HEK293 (cell line): ENCODE measurements at regions of chr22 and their contacts with region 1.

Region 1: GRCh38 chr22:35150183-35151107 is 84.5 kb downstream of the ISX start:
- H3K4me3 ChIP-seq: no peak overlapping the region
- H3K27ac ChIP-seq: no peak overlapping the region
- H3K4me1 ChIP-seq: no peaks in the 10 kb centered on the region
- CTCF ChIP-seq: peak; percentile 70

Region 2: GRCh38 chr22:35023692-35024363 is 126.6 kb before region 1 on chr22:
- CTCF ChIA-PET with region 1: interaction called, 10 read pairs
- POLR2A ChIA-PET with region 1: no interaction called
- H3K4me3 ChIP-seq: no peak overlapping the region
- H3K27ac ChIP-seq: no peak overlapping the region
- H3K4me1 ChIP-seq: no peaks in the 10 kb centered on the region
- CTCF ChIP-seq: peak; percentile 60

Region 3: GRCh38 chr22:35043252-35043931 is 107.1 kb before region 1 on chr22:
- CTCF ChIA-PET with region 1: interaction called, 18 read pairs
- POLR2A ChIA-PET with region 1: no interaction called
- H3K4me3 ChIP-seq: no peak overlapping the region
- H3K27ac ChIP-seq: no peak overlapping the region
- H3K4me1 ChIP-seq: no peaks in the 10 kb centered on the region
- CTCF ChIP-seq: no peak

Region 4: DNA sequence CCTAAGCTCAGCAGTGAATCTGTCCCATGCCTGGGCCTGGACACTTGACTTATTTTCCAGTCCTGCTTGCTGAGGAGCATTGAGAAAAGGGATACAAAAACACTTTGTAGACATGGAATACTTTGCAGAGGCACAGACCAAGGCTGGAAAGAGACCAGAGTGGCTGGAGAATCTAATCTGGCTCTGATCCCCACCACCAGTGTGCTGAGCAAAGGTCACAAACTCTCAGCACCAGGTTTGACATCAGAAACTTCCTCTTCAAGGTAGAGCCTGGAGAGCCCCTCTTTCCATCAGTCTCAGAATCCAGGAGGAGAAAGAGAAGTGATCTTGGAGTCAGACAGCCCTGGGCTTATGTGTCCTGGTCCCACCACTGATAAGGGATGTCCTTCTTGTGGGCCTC is 31.0 kb before region 1 on chr22:
- CTCF ChIA-PET with region 1: interaction called, 12 read pairs
- POLR2A ChIA-PET with region 1: no interaction called
- H3K4me3 ChIP-seq: no peak overlapping the region
- H3K27ac ChIP-seq: no peak overlapping the region
- H3K4me1 ChIP-seq: no peaks in the 10 kb centered on the region
- CTCF ChIP-seq: no peak

Region 5: GRCh38 chr22:35170716-35171697 is 20.6 kb after region 1 on chr22:
- CTCF ChIA-PET with region 1: interaction called, 15 read pairs
- POLR2A ChIA-PET with region 1: no interaction called
- H3K4me3 ChIP-seq: no peak overlapping the region
- H3K27ac ChIP-seq: no peak overlapping the region
- H3K4me1 ChIP-seq: no peaks in the 10 kb centered on the region
- CTCF ChIP-seq: no peak

Region 6: DNA sequence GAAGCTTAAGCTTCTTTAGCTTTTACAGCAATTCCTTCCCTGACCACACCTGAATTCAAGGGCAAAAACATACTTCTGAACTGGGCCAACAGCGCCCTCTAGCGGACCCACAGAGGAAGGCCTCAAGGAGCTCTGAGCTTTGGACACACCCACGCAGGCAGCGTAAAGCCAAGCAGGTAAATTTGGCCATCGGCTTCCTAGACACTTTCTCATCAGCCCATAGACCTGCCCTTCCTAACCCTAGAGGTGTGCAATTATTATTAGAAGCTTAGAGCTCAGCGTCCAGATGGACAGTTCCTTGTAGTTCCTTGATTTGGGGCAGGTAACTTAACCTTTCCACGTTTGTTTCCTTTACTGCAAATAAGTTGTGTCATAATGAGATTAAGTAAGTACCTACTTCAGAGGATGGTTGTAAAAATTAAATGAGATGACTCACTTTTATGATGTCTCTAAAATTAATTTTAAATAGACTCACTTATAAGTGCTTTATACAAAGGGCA is 81.2 kb after region 1 on chr22:
- CTCF ChIA-PET with region 1: interaction called, 41 read pairs
- POLR2A ChIA-PET with region 1: no interaction called
- H3K4me3 ChIP-seq: no peak overlapping the region
- H3K27ac ChIP-seq: no peak overlapping the region
- H3K4me1 ChIP-seq: no peaks in the 10 kb centered on the region
- CTCF ChIP-seq: peak; percentile 80